Heart right ventricle (tissue), 16 donors: ENCODE measurements at regions of chr4 and their contacts with region 1.

Region 1: GRCh38 chr4:51831133-51831532 is 11.8 kb upstream of the DCUN1D4 start:
- DNase-seq: peak; percentile 53 to 54
- ATAC-seq: peak in 6 of 8 donors; percentile 56 to 79 (median 64)
- H3K4me3 ChIP-seq: no peak overlapping the region
- H3K27ac ChIP-seq: no peak overlapping the region
- H3K4me1 ChIP-seq: no peaks in the 10 kb centered on the region
- H3K27me3 ChIP-seq: peaks cover 0 to 12% (median 0%) of the 10 kb centered on the region in 7 donors
- CTCF ChIP-seq: peak; percentile 29 to 81 (median 67)

Region 2: DNA sequence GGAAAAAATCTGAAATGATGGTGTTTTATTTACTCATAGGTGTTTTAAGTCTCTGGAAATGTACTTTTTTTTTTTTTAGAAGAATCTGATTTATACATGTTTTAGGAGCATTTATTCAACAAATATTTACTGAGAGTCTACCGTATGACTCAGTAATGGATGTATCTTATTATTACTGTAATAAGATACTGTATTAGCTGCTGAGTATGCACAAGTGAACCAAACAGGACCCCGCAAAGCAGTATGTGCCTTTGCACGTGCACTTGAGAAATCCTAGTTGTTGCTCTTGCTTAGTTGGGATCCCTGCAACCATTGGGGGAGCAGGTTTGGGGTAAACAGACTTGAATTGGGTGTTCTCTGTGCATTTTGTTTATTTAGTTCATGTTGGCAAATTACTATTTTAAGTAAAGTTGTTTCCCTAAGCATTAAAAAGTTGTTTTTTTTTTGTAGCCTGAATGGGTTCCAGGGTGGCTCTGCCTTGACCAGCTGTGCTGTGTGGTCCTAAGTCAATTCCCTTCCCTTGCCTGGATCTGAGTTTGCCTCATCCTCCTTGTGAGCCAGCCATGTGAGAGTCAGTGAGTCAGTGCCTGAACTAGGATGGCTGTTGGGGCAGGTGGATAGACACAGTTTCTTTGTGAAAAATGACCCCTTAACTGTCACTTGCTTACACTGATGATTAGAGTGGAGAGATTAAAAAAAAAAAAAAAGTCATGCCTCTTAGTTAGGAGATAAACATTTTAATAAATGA is 39.5 kb after region 1 on chr4:
- intact Hi-C with region 1: no loop called
- DNase-seq: no peak
- ATAC-seq: no peak
- H3K4me3 ChIP-seq: no peak overlapping the region
- H3K27ac ChIP-seq: no peak overlapping the region
- H3K4me1 ChIP-seq: peaks cover 0 to 6% (median 0%) of the 10 kb centered on the region in 9 donors
- H3K27me3 ChIP-seq: no peaks in the 10 kb centered on the region
- CTCF ChIP-seq: no peak

Region 3: DNA sequence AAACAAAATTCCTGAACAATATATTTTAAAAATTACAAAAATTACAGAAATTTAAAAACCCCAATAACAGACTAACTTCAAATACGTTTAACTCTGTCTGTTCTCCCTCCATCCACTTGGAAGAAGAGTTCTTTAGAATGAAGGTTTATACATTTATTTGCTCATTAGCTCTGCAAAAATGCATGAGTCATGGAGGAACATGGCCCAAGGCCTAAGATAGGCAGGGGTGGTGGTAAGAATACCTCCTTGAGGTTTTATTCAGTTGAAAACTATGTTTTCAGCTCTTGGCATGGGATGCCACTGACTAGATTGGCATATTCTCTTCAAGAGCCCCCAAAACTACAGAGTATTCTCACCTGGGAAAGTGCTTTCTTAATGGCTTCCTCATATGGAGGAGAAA is 197.8 kb after region 1 on chr4:
- intact Hi-C with region 1: loop called in 3 of 10 experiments (anchors 1 to 2 kb)
- DNase-seq: no peak
- ATAC-seq: no peak
- H3K4me3 ChIP-seq: no peak overlapping the region
- H3K27ac ChIP-seq: no peak overlapping the region
- H3K4me1 ChIP-seq: peaks cover 0 to 9% (median 0%) of the 10 kb centered on the region in 9 donors
- H3K27me3 ChIP-seq: no peaks in the 10 kb centered on the region
- CTCF ChIP-seq: no peak

Region 4: GRCh38 chr4:52510939-52511565 is 679.9 kb after region 1 on chr4:
- intact Hi-C with region 1: no loop called
- DNase-seq: no peak
- ATAC-seq: peak in 5 of 8 donors; percentile 63 to 75 (median 65)
- H3K4me3 ChIP-seq: no peak overlapping the region
- H3K27ac ChIP-seq: peak overlapping the region in 9 of 10 donors; percentile 3 to 81 (median 46)
- H3K4me1 ChIP-seq: peaks cover 4 to 40% (median 35%) of the 10 kb centered on the region in 9 donors
- H3K27me3 ChIP-seq: no peaks in the 10 kb centered on the region
- CTCF ChIP-seq: no peak